ENCODE measurements at regions of chr1 and their contacts with region 1.

Region 1: DNA sequence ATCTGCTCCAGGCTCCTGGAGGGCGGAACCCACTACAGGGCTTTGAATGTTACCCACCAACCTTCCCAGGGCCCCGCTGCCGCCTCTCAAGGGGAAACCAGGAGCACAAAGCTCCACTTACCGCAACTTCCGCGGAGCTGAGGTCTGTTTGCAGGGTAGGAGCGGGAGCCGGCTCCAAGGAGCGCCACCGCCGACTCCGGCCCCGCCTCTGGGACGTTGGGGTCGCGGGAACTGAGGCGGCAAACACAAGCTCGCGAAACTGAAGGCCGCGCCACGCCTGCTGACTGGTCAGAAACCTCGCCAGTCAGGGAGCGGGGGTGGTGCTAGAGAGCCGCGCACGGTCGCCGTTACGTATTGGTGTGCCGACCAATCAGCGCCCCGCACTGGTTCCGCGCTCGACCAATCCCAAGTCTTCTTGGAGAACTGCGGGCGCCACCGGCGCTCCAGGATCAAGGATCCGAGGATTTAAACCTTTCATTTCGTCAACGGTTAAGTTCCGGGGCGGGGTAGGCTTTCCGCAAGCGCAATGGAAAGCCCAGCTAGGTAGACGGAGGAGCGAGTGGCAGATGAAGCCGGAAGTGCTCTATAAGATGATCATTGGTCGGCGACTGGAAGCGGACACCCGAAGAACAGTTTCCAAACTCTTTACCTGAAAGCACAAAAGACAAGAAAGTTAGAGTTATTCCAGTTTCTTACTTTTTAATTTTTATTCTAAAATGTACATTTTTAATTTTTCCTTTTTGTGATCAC is at the start of gene STIL:
- DNase-seq: peak; percentile 99
- H3K4me3 Mint-ChIP-seq: peak within 1 kb of the TSS; percentile 86
- H3K27ac Mint-ChIP-seq: peak within 1 kb of the TSS; percentile 82
- H3K4me1 Mint-ChIP-seq: peaks cover 17% of the 10 kb centered on the region
- H3K27me3 Mint-ChIP-seq: no peaks in the 10 kb centered on the region
- total RNA-seq, gene STIL: 24.8 and 27.6 TPM in 2 replicates

Region 2: DNA sequence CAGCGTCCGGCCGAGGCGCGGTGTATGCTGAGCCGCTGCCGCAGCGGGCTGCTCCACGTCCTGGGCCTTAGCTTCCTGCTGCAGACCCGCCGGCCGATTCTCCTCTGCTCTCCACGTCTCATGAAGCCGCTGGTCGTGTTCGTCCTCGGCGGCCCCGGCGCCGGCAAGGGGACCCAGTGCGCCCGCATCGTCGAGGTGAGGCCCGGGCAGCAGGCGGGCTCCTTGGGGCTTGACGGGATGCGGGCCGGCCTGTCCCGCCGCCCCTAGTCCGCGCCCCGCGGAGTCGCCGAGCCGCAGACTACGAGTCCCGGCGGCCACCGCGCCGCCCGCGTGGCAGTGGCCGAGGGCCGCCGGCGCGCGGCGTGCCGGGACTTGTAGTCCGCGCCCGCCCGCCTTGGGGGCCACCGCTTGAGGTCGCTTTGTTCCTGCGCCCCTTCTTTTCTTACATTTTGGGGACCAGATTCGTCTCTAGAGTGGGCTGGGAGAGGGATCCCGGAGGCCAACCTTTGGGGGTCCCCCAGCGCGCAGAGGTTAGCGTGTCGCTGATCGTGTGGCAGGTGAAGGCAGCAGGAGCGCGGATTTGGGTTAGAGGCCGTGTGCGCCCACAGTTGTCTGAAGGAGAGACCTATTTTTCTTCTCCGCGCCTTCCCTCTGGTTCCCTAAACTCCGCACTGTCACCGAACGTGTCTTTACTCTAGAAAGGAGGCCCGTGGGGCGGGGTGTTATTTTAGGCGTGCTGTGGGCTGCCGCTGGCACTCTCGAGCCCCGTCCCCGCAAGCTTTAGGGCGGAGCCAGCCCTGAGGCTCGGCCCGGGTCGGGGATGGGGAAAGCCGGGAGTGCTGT is 20.1 kb after region 1 on chr1:
- intact Hi-C with region 1: loop called (anchors 1 kb)
- DNase-seq: peak; percentile 75
- H3K4me3 Mint-ChIP-seq: peak overlapping the region; percentile 95
- H3K27ac Mint-ChIP-seq: peak overlapping the region; percentile 98
- H3K4me1 Mint-ChIP-seq: peaks cover 11% of the 10 kb centered on the region
- H3K27me3 Mint-ChIP-seq: no peaks in the 10 kb centered on the region

Measured in activated T-helper 2 cell treated with anti-CD3 and anti-CD28 coated beads, Interferon-gamma antibody, Interleukin-2, Interleukin-4, amounts not matched to agents 10 μg/mL and 5 μg/mL and 100 μg/mL, durations not matched to agents 14 hours and 24 hours and 36 hours (primary cell).